Activated CD8-positive, alpha-beta memory T cell treated with anti-CD3 and anti-CD28 coated beads, Interleukin-2, amount 10 ng/mL, durations not matched to agents 7 days and 5 days (primary cell): ENCODE measurements at regions of chr14 and their contacts with region 1.

Region 1: DNA sequence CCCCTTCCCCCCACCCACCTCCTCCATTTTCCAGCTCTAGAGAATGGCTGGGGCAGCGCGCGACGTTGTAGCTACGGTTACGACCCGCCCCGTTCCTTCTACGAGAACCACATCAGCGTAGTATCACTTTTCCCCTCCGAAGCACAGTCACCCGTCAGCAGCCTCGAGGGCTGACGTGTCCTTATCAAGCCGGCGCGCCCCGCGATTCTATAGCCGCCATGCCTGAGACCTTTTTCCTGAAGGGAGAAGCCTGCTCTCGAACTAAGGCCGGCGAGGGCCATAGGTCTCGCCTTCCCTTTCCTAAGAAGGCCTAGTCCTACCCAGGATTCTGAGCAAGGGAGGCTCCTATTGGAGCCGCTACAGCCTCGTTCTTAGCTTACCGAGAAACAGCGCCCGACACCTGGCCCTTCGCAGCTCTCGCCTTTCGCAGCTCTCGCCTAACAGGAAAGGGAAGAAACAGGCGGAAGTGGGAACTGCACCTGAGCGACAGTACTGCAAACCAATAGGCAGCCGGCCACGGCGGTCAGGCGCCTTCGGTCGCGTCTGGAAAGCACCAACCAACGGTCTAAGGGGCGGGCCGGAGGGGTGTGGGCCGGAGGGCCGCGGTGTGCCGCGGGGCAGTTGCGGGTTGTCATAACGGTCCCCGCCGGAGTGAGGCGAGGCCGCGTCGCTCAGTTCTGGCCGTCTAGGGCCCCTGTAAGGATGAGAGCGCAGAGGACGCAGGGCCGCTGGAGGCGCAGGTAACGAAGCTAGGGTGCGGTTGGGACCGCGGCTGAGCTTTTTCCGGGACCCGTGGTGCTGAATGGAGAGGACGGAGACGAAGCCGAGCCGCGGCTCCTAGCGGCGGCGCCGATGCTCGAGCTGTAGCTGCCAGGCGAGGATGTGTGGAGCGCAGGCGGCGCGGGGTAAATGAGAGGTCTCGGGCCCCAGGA is at the starts of genes MGAT2 and RPL36AL:
- DNase-seq: peak; percentile 98
- ATAC-seq: peak; percentile 88
- H3K4me3 Mint-ChIP-seq: peak within 1 kb of the TSS; percentile 84
- H3K27ac Mint-ChIP-seq: peak within 1 kb of the TSS; percentile 92
- H3K4me1 Mint-ChIP-seq: peaks cover 46% of the 10 kb centered on the region
- H3K27me3 Mint-ChIP-seq: no peaks in the 10 kb centered on the region
- total RNA-seq, gene MGAT2: 68.4 to 75.9 TPM
- total RNA-seq, gene RPL36AL: 245 to 248 TPM

Region 2: DNA sequence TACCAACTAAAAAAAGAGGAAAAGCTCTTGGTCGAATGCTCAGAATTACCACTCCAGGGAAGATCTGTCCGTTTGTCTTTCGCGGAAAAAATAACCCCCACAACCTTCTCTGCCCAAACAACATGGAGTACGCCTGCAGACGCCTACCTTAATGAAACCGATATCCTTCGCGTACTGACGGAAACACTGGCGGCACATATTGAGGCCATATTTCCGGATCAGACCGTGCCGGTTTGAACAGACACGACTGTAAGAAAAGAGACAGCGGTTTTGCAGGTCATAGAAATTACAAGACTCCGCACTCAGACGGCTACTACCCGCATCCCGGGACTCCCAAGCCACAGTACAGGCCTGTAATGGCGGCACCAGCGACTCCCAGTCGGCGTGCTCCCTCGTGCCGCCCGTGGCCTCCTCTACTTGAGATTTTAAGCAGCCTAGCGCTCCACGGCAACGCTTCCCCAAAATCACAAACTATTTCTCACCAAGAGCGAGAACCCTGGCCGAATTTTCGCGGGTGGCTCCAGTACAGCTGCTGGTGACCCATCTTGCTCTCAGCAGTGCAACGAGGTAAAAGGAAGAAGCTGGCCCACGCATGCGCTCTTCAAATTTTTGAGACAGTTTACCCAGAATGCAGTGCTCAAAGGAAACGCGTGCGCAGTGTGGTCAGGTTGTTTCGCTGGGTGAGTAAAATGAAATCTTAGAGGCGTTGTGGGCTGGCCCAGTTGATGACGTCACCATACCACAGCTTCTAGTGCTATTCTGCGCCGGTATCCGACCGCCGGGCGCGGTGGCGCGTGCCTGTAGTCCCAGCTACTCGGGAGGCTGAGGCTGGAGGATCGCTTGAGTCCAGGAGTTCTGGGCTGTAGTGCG is 34.4 kb before region 1 on chr14 and contains the start of gene RPS29:
- CTCF ChIA-PET with region 1: interaction called, 14 read pairs
- DNase-seq: peak; percentile 99
- ATAC-seq: peak; percentile 87
- H3K4me3 Mint-ChIP-seq: peak within 1 kb of the TSS; percentile 89
- H3K27ac Mint-ChIP-seq: peak within 1 kb of the TSS; percentile 99
- H3K4me1 Mint-ChIP-seq: peaks cover 38% of the 10 kb centered on the region
- H3K27me3 Mint-ChIP-seq: no peaks in the 10 kb centered on the region
- total RNA-seq, gene RPS29: 1,378 to 1,419 TPM